ENCODE measurements at regions of chr21 and their contacts with region 1.

Region 1: GRCh38 chr21:38679531-38679930 is 126.2 kb upstream of the ETS2 start:
- DNase-seq: no peak
- ATAC-seq: no peak
- H3K4me3 ChIP-seq: no peak overlapping the region
- H3K4me3 Mint-ChIP-seq: no peak overlapping the region
- H3K27ac ChIP-seq: no peak overlapping the region
- H3K27ac Mint-ChIP-seq: no peak overlapping the region
- H3K4me1 ChIP-seq: no peaks in the 10 kb centered on the region
- H3K4me1 Mint-ChIP-seq: no peaks in the 10 kb centered on the region
- H3K27me3 ChIP-seq: peaks cover 0 to 3% of the 10 kb centered on the region in 2 experiments
- H3K27me3 Mint-ChIP-seq: peaks cover 19% of the 10 kb centered on the region
- CTCF ChIP-seq: no peak

Region 2: DNA sequence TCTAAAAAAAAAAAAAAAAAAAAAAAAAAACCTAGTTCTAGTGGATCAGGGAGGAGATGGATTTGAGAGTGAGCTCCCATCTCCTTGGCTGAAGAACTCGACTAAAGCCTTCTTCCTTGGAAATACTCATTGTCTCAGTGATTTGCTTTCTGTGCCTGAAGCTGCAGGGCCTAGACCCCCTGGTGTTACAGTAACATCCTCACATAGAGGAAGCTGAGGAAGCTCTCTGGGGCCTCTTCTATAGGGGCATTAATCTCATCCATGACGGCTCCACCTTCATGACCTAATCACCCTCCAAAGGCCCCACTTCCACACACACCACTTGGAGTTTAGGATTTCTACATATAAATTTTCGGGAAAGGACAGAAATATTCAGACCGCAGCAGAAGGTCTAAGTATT is 30.3 kb after region 1 on chr21:
- CTCF ChIA-PET with region 1: no interaction called
- POLR2A ChIA-PET with region 1: no interaction called
- intact Hi-C with region 1: loop called in 1 of 2 experiments (anchors 1 kb)
- DNase-seq: no peak
- ATAC-seq: no peak
- H3K4me3 ChIP-seq: no peak overlapping the region
- H3K4me3 Mint-ChIP-seq: no peak overlapping the region
- H3K27ac ChIP-seq: no peak overlapping the region
- H3K27ac Mint-ChIP-seq: no peak overlapping the region
- H3K4me1 ChIP-seq: no peaks in the 10 kb centered on the region
- H3K4me1 Mint-ChIP-seq: no peaks in the 10 kb centered on the region
- H3K27me3 ChIP-seq: no peaks in the 10 kb centered on the region
- H3K27me3 Mint-ChIP-seq: peaks cover 3% of the 10 kb centered on the region
- CTCF ChIP-seq: no peak